ENCODE measurements at regions of chr11 and their contacts with region 1.

Region 1: GRCh38 chr11:18501629-18502028 is 25.1 kb downstream of the TSG101 start:
- DNase-seq: no peak
- ATAC-seq: no peak
- H3K4me3 ChIP-seq: no peak overlapping the region
- H3K27ac ChIP-seq: no peak overlapping the region
- H3K4me1 ChIP-seq: no peaks in the 10 kb centered on the region
- H3K27me3 ChIP-seq: no peaks in the 10 kb centered on the region
- CTCF ChIP-seq: no peak
- POLR2A ChIP-seq: no peak
- RAD21 ChIP-seq: no peak

Region 2: GRCh38 chr11:18347471-18348125 is 154.0 kb before region 1 on chr11:
- CTCF ChIA-PET with region 1: interaction called, 3 read pairs
- POLR2A ChIA-PET with region 1: no interaction called
- dilution Hi-C with region 1: no loop called
- in situ Hi-C with region 1: no loop called
- intact Hi-C with region 1: loop called (anchors 10 kb)
- DNase-seq: peak; percentile 92
- ATAC-seq: peak; percentile 96
- H3K4me3 ChIP-seq: no peak overlapping the region
- H3K27ac ChIP-seq: peak overlapping the region; percentile 29; the same call in 1 of the 2 replicates
- H3K4me1 ChIP-seq: no peaks in the 10 kb centered on the region; the same call in 1 of the 2 replicates
- H3K27me3 ChIP-seq: no peaks in the 10 kb centered on the region
- CTCF ChIP-seq: no peak
- POLR2A ChIP-seq: no peak
- RAD21 ChIP-seq: no peak

Region 3: GRCh38 chr11:18408558-18409242 is 92.9 kb before region 1 on chr11:
- CTCF ChIA-PET with region 1: interaction called, 9 read pairs
- POLR2A ChIA-PET with region 1: no interaction called
- dilution Hi-C with region 1: no loop called
- in situ Hi-C with region 1: no loop called
- intact Hi-C with region 1: loop called (anchors 10 kb)
- DNase-seq: peak; percentile 8
- ATAC-seq: no peak; the same call in 1 of the 2 replicates
- H3K4me3 ChIP-seq: no peak overlapping the region
- H3K27ac ChIP-seq: no peak overlapping the region
- H3K4me1 ChIP-seq: no peaks in the 10 kb centered on the region
- H3K27me3 ChIP-seq: no peaks in the 10 kb centered on the region
- CTCF ChIP-seq: no peak
- POLR2A ChIP-seq: peak; percentile 86
- RAD21 ChIP-seq: no peak